WTC11 (cell line): ENCODE measurements at regions of chr1 and their contacts with region 1.

Region 1: DNA sequence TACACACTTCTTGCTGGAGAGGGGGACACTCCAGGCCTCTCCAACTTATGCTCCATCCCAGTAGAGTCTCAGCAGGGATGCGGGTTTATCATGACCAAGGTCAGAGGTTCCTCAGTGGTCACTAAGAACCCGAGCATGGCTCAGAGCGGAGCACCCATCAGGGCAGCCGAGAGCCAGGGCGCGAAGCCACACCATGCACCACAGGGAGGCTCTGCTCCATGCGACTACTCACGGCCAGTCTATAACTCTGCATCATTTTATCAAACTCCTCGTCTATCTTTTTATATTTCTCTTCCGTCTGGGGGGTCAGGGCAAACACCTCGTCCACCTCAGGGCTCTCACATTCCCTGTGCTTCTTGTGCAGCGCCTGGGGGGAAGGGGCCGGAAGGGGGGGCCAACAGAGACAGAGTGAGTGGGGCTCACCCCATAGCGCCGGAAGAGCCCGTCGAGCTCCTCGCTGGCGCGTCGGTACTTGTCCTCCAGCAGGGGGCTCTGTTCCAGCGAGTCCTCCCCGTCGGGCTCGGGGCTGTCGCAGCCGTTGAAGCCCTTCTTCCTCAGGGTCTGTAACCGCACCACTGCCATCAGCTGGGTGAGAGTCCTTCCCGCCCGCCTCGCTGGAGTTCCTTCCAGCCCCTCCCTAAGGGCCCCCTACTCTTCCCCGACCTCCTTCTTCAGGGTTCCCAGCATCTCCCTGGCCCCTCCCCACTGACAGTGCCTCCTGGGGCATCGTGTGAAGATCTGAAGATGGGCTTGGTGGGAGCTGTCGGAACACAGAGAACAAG is 20.0 kb downstream of the MEF2D start:
- DNase-seq: peak; percentile 91
- ATAC-seq: peak; percentile 87
- H3K4me3 Mint-ChIP-seq: no peak overlapping the region
- H3K27ac Mint-ChIP-seq: peak overlapping the region; percentile 14
- H3K4me1 Mint-ChIP-seq: peaks cover 27% of the 10 kb centered on the region
- H3K27me3 Mint-ChIP-seq: no peaks in the 10 kb centered on the region
- CTCF ChIP-seq: peak; percentile 73

Region 2: DNA sequence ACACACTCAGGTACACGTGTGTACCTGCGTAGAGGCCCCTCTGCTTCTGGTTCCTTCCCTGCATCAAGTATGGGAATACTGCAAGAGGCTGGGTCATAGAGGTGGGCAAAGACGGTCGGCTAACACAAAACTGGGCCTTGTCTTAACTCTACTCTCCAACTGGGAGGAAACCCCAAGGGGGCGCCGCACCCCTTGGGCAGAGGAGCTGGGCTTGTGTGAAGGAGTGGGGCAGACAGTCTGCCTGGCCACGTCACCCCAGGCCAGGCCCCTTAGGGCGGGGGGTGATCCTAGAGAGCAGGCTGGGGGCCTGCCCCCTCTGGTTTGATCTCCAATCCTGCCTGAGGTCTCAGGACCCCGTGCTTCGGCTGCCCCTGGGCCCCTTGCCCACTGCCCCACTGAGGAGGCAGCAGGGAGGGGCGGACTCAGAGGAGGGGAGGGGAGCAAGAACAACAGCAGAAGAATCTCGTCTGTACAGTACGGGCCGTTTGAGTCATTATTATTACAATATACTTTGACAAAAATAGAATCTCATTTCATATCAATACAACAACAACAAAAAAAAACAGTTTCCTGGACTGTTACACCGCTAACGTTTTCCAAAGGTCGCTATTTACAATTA is 14.7 kb before region 1 on chr1:
- CTCF ChIA-PET with region 1: interaction called, 61 read pairs
- POLR2A ChIA-PET with region 1: interaction called, 4 read pairs
- DNase-seq: peak; percentile 66
- ATAC-seq: peak; percentile 75
- H3K4me3 Mint-ChIP-seq: no peak overlapping the region
- H3K27ac Mint-ChIP-seq: peak overlapping the region; percentile 56
- H3K4me1 Mint-ChIP-seq: peaks cover 42% of the 10 kb centered on the region
- H3K27me3 Mint-ChIP-seq: no peaks in the 10 kb centered on the region
- CTCF ChIP-seq: no peak

Region 3: GRCh38 chr1:156517746-156518145 is 37.1 kb after region 1 on chr1:
- CTCF ChIA-PET with region 1: interaction called, 17 read pairs
- POLR2A ChIA-PET with region 1: no interaction called
- DNase-seq: no peak
- ATAC-seq: no peak
- H3K4me3 Mint-ChIP-seq: no peak overlapping the region
- H3K27ac Mint-ChIP-seq: no peak overlapping the region
- H3K4me1 Mint-ChIP-seq: no peaks in the 10 kb centered on the region
- H3K27me3 Mint-ChIP-seq: 0 out of 2 replicates have a peak, but pooled peaks cover 4% of the 10 kb centered on the region
- CTCF ChIP-seq: no peak

Region 4: GRCh38 chr1:156538676-156539440 is 58.3 kb after region 1 on chr1:
- CTCF ChIA-PET with region 1: interaction called, 10 read pairs
- POLR2A ChIA-PET with region 1: no interaction called
- DNase-seq: no peak
- ATAC-seq: no peak
- H3K4me3 Mint-ChIP-seq: no peak overlapping the region
- H3K27ac Mint-ChIP-seq: peak overlapping the region; percentile 54
- H3K4me1 Mint-ChIP-seq: peaks cover 9% of the 10 kb centered on the region; the same call in 1 of the 2 replicates
- H3K27me3 Mint-ChIP-seq: no peaks in the 10 kb centered on the region
- CTCF ChIP-seq: no peak

Region 5: GRCh38 chr1:156583821-156584622 is 103.4 kb after region 1 on chr1:
- CTCF ChIA-PET with region 1: interaction called, 18 read pairs
- POLR2A ChIA-PET with region 1: no interaction called
- DNase-seq: peak; percentile 85
- ATAC-seq: peak; percentile 65
- H3K4me3 Mint-ChIP-seq: peak overlapping the region; percentile 52
- H3K27ac Mint-ChIP-seq: no peak overlapping the region
- H3K4me1 Mint-ChIP-seq: peaks cover 20% of the 10 kb centered on the region
- H3K27me3 Mint-ChIP-seq: peaks cover 2% of the 10 kb centered on the region
- CTCF ChIP-seq: peak; percentile 87